Vagina (tissue), 2 donors: ENCODE measurements at regions of chr3 and their contacts with region 1.

Region 1: GRCh38 chr3:69691860-69692259 is 47.4 kb upstream of the MITF start:
- DNase-seq: no peak
- H3K4me3 ChIP-seq: no peak overlapping the region
- H3K27ac ChIP-seq: no peak overlapping the region
- H3K4me1 ChIP-seq: peaks cover 7% of the 10 kb centered on the region
- H3K27me3 ChIP-seq: no peaks in the 10 kb centered on the region
- CTCF ChIP-seq: no peak
- POLR2A ChIP-seq: no peak

Region 2: DNA sequence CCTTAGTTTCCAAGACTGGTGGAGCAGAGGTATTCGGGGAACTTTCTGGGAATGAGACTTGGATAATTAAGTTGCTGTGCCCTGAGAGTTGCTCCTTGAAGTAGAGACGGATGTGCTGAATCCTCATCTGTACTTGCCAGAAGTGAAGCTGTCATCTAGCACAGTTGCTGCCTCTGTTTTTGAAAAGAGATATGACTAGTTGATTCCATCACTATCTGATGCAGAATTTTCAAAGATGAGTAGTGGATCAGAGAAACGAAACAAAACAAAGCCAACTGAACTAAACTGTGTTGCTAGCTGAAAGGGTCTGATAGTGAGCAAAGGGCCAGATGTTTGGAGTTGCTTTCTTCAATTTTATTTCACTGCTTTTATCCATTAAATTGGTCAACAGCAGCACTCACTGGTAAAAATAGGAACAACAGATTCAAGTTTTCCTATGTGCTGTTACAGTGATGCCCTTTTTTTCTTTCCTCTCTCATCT is 100.1 kb after region 1 on chr3:
- intact Hi-C with region 1: loop called (anchors 10 kb)
- DNase-seq: no peak
- H3K4me3 ChIP-seq: no peak overlapping the region
- H3K27ac ChIP-seq: peak overlapping the region; percentile 44
- H3K4me1 ChIP-seq: peaks cover 38% of the 10 kb centered on the region
- H3K27me3 ChIP-seq: no peaks in the 10 kb centered on the region
- CTCF ChIP-seq: peak in 2 of 3 experiments; percentile 17 to 49
- POLR2A ChIP-seq: no peak

Region 3: DNA sequence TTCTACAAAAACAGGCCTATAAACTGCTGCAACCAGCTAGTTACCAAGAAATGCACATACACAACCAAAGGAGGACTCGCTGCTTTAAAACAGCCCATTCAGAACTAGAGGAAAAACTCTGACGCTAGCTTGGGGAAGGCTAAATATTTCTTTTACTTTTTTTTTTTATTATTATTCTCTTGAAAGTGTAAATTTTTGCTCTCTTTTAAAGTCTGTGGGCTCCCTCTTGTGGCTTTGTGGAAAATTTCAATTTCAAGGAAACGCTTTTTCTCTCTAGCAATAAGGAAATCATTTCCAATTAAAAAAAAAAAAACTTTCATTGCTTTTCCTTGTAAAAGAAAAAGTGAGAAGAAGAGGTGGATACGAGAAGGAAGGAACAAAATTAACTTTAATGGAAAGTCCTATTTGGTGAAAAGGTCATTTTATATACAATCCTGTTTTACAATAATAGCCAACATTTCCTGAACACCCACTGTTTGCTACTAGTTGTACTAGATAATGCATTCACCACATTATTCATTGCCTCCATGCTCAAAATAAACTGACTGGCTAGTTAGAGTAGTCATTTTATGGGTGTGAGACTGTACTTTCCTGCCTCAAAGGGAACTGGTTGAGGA is 256.5 kb after region 1 on chr3:
- intact Hi-C with region 1: loop called (anchors 10 kb)
- DNase-seq: no peak
- H3K4me3 ChIP-seq: no peak overlapping the region
- H3K27ac ChIP-seq: no peak overlapping the region
- H3K4me1 ChIP-seq: peaks cover 4% of the 10 kb centered on the region
- H3K27me3 ChIP-seq: no peaks in the 10 kb centered on the region
- CTCF ChIP-seq: peak; percentile 44 to 50 (median 48)
- POLR2A ChIP-seq: no peak